A673 (cell line): ENCODE measurements at regions of chr1 and their contacts with region 1.

Region 1: GRCh38 chr1:155308493-155309422 is at the start of gene FDPS:
- DNase-seq: peak; percentile 100
- H3K4me3 ChIP-seq: peak within 1 kb of the TSS; percentile 76
- H3K27ac ChIP-seq: peak within 1 kb of the TSS; percentile 96
- H3K4me1 ChIP-seq: peaks cover 29% of the 10 kb centered on the region
- H3K27me3 ChIP-seq: no peaks in the 10 kb centered on the region
- CTCF ChIP-seq: no peak
- total RNA-seq, gene FDPS: 449 and 481 TPM in 2 replicates

Region 2: DNA sequence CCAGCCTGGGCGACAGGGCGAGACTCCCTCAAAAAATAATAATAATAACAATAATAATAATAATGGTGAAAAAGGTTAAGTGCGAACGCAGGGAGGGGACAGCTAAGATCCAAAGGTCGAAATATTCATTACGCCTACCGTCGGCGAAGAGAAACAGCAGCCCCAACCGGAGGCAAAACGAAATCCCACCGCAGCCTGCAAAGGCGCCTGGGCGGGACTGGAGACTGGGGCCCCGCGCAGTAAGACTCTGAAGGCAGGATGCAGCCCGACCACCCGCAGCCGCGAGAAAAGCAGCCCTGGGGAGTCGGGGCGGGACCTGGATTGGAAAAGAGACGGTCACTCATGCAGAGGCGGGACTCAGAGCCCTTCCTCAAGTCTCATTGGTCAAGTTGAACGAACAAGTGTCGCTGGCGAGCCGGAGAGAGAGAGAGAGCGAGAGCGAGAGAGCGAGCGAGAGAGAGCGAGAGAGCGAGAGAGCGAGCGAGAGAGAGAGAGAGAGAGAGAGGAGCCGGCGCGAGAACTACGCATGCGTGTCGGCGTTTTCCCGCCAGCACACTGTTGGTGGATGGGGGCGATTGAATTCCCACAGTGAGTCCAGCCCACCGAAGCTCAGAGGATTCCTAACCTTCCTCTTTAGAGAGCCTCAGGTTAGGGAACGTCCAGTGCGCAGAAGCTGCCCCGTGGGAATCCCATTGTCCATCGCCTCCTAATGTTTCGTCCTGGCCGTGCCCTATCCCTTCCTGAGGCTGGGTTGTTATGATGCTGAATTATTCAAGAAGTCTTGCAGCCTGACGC is 64.2 kb before region 1 on chr1:
- CTCF ChIA-PET with region 1: interaction called, 3 read pairs
- POLR2A ChIA-PET with region 1: no interaction called
- intact Hi-C with region 1: loop called (anchors 1 kb)
- DNase-seq: peak; percentile 100
- H3K4me3 ChIP-seq: peak overlapping the region; percentile 56
- H3K27ac ChIP-seq: peak overlapping the region; percentile 86
- H3K4me1 ChIP-seq: peaks cover 30% of the 10 kb centered on the region
- H3K27me3 ChIP-seq: no peaks in the 10 kb centered on the region
- CTCF ChIP-seq: peak; percentile 51

Region 3: DNA sequence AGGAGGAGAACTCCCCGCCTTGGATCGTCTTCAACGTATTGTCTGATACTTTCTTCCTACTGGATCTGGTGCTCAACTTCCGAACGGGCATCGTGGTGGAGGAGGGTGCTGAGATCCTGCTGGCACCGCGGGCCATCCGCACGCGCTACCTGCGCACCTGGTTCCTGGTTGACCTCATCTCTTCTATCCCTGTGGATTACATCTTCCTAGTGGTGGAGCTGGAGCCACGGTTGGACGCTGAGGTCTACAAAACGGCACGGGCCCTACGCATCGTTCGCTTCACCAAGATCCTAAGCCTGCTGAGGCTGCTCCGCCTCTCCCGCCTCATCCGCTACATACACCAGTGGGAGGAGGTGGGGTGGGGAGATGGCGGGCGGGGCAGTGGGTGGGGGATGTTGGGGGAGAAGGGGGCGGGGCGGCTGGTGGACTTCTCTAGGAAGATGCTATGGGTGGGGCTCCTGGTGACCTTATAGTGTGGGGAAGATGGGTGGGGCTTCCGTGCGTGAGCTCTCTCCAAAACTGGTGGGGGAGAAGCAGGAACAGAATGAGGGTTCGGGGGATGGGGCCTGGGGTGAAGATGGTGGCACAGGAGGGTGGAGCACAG is 26.2 kb before region 1 on chr1:
- CTCF ChIA-PET with region 1: no interaction called
- POLR2A ChIA-PET with region 1: no interaction called
- intact Hi-C with region 1: loop called (anchors 2 kb)
- DNase-seq: no peak
- H3K4me3 ChIP-seq: no peak overlapping the region
- H3K27ac ChIP-seq: no peak overlapping the region
- H3K4me1 ChIP-seq: peaks cover 16% of the 10 kb centered on the region
- H3K27me3 ChIP-seq: no peaks in the 10 kb centered on the region
- CTCF ChIP-seq: no peak